GM12878 (cell line): ENCODE measurements at regions of chr14 and their contacts with region 1.

Region 1: GRCh38 chr14:36070031-36070719 is 106.3 kb downstream of the PTCSC3 start:
- DNase-seq: no peak
- ATAC-seq: peak; percentile 92
- H3K4me3 ChIP-seq: no peak overlapping the region
- H3K27ac ChIP-seq: no peak overlapping the region
- H3K4me1 ChIP-seq: no peaks in the 10 kb centered on the region
- H3K27me3 ChIP-seq: no peaks in the 10 kb centered on the region
- CTCF ChIP-seq: peak; percentile 72 to 88 (median 80)
- EP300 ChIP-seq: no peak
- POLR2A ChIP-seq: no peak
- RAD21 ChIP-seq: peak; percentile 88

Region 2: DNA sequence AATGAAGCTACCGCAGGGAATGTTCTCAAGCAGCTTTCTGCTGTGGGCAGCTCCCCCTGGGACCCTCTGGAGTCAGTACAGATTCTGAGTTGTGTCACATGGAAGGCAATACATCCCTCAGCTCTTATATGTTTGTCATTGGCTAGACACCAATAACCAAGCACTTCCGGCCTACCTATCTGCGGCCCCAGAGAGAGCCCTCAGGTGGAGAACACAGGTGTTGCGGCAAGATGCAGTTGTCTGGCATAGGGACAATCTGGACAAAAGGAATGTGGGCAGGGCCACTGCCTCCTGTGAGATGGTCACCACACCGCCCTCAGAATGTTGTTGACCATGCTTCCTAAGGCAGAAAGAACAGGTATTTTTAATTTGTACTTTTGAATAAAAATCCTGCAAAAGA is 125.3 kb before region 1 on chr14:
- CTCF ChIA-PET with region 1: interaction called, 16 read pairs
- POLR2A ChIA-PET with region 1: no interaction called
- RAD21 ChIA-PET with region 1: no interaction called
- SMC1A ChIA-PET with region 1: no interaction called
- in situ Hi-C with region 1: no loop called
- intact Hi-C with region 1: no loop called
- DNase-seq: no peak
- ATAC-seq: peak; percentile 73
- H3K4me3 ChIP-seq: no peak overlapping the region
- H3K27ac ChIP-seq: no peak overlapping the region
- H3K4me1 ChIP-seq: no peaks in the 10 kb centered on the region
- H3K27me3 ChIP-seq: no peaks in the 10 kb centered on the region
- CTCF ChIP-seq: peak; percentile 24 to 49 (median 36)
- EP300 ChIP-seq: no peak
- POLR2A ChIP-seq: no peak
- RAD21 ChIP-seq: peak; percentile 46

Region 3: GRCh38 chr14:36021030-36021422 is 49.1 kb before region 1 on chr14:
- CTCF ChIA-PET with region 1: interaction called, 14 read pairs
- POLR2A ChIA-PET with region 1: no interaction called
- RAD21 ChIA-PET with region 1: no interaction called
- SMC1A ChIA-PET with region 1: interaction called, 3 read pairs
- in situ Hi-C with region 1: no loop called
- intact Hi-C with region 1: no loop called
- DNase-seq: peak; percentile 23
- ATAC-seq: peak; percentile 76
- H3K4me3 ChIP-seq: no peak overlapping the region
- H3K27ac ChIP-seq: no peak overlapping the region
- H3K4me1 ChIP-seq: peaks cover 14% of the 10 kb centered on the region
- H3K27me3 ChIP-seq: no peaks in the 10 kb centered on the region
- CTCF ChIP-seq: no peak
- EP300 ChIP-seq: no peak
- POLR2A ChIP-seq: no peak
- RAD21 ChIP-seq: no peak

Region 4: DNA sequence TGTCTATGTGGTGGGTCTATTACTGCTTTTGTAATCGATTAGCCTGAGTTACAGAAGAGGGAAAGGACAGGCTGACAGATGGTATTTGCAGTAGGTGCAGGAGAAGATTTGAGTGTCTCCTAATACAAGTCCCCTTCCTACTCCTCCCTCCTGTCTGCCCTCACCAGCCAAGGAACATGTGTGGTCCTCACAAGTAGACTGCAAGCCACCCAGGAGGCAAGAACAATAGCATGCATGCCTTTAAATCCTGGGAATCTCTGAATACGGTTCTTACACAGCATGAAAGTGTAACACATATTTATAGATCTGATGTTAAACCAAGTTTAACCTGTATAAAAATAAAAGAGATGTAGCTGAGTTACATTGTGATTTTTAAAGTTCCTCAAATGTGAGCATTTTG is 10.6 kb before region 1 on chr14:
- CTCF ChIA-PET with region 1: interaction called, 20 read pairs
- POLR2A ChIA-PET with region 1: no interaction called
- RAD21 ChIA-PET with region 1: interaction called, 3 read pairs
- SMC1A ChIA-PET with region 1: interaction called, 8 read pairs
- in situ Hi-C with region 1: no loop called
- intact Hi-C with region 1: no loop called
- DNase-seq: no peak
- ATAC-seq: no peak
- H3K4me3 ChIP-seq: no peak overlapping the region
- H3K27ac ChIP-seq: no peak overlapping the region
- H3K4me1 ChIP-seq: no peaks in the 10 kb centered on the region
- H3K27me3 ChIP-seq: no peaks in the 10 kb centered on the region; a peak in 1 of 4 replicates
- CTCF ChIP-seq: no peak
- EP300 ChIP-seq: no peak
- POLR2A ChIP-seq: no peak
- RAD21 ChIP-seq: no peak

Region 5: GRCh38 chr14:36524874-36525745 is 454.9 kb after region 1 on chr14:
- CTCF ChIA-PET with region 1: interaction called, 24 read pairs
- POLR2A ChIA-PET with region 1: no interaction called
- RAD21 ChIA-PET with region 1: interaction called, 5 read pairs
- SMC1A ChIA-PET with region 1: interaction called, 3 read pairs
- in situ Hi-C with region 1: no loop called
- intact Hi-C with region 1: no loop called
- DNase-seq: no peak
- ATAC-seq: peak; percentile 56
- H3K4me3 ChIP-seq: no peak overlapping the region
- H3K27ac ChIP-seq: no peak overlapping the region
- H3K4me1 ChIP-seq: no peaks in the 10 kb centered on the region
- H3K27me3 ChIP-seq: peaks cover 6 to 17% of the 10 kb centered on the region in 2 experiments
- CTCF ChIP-seq: peak; percentile 10 to 35 (median 30); a peak in 3 of 6 replicates
- EP300 ChIP-seq: no peak
- POLR2A ChIP-seq: no peak
- RAD21 ChIP-seq: 0 out of 2 replicates have a peak, but pooled peaks have one; percentile 9

Region 6: DNA sequence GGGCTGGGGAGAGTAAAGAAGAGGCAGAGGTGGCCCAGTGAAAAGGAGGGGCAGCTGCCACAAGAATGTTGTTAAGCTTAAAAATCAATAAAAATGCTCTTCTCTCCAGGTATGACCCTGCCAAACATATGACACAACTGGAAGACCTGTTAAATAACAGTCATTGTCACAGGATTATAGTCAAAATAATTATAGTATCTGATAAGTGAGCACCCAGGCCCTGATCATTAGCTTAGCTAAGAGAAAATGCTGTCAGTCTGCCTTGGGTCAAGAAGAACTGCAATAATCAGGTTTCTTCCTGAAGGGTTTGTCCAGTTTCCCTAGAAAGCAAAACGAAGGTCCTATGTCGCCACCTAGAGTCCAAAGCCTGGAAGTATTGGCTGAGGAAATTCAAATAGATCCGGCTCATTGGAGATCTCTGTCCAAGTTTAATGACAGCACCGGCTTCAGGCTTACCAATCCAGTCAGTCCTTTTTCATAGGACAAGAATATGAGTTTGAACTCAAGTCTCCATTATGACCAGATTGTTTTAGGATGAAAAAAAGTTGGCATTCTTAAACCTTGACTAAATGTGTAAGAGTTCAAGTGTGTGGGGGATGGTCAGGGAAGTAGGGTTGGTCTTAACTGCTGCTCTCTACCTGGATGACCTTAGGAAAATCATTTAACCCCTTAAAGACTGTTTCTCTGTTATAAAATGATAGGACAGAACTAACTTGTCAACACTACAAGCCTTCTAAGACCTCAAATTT is 534.8 kb after region 1 on chr14:
- CTCF ChIA-PET with region 1: interaction called, 5 read pairs
- POLR2A ChIA-PET with region 1: no interaction called
- RAD21 ChIA-PET with region 1: no interaction called
- SMC1A ChIA-PET with region 1: no interaction called
- in situ Hi-C with region 1: loop called (anchors 10 kb)
- intact Hi-C with region 1: loop called (anchors 2 kb)
- DNase-seq: no peak
- ATAC-seq: peak; percentile 82
- H3K4me3 ChIP-seq: no peak overlapping the region
- H3K27ac ChIP-seq: no peak overlapping the region
- H3K4me1 ChIP-seq: no peaks in the 10 kb centered on the region
- H3K27me3 ChIP-seq: no peaks in the 10 kb centered on the region
- CTCF ChIP-seq: peak; percentile 80 to 82 (median 80)
- EP300 ChIP-seq: no peak
- POLR2A ChIP-seq: no peak
- RAD21 ChIP-seq: peak; percentile 86